Breast epithelium (tissue), 4 donors: ENCODE measurements at regions of chr2 and their contacts with region 1.

Region 1: GRCh38 chr2:115842306-115842705 is 1399.9 kb downstream of the DPP10 start:
- DNase-seq: no peak
- H3K4me3 ChIP-seq: no peak overlapping the region
- H3K27ac ChIP-seq: no peak overlapping the region
- H3K4me1 ChIP-seq: no peaks in the 10 kb centered on the region
- H3K27me3 ChIP-seq: no peaks in the 10 kb centered on the region
- CTCF ChIP-seq: no peak
- POLR2A ChIP-seq: no peak

Region 2: GRCh38 chr2:115327061-115327460 is 515.2 kb before region 1 on chr2:
- intact Hi-C with region 1: loop called (anchors 5 kb)
- DNase-seq: no peak
- H3K4me3 ChIP-seq: no peak overlapping the region
- H3K27ac ChIP-seq: no peak overlapping the region
- H3K4me1 ChIP-seq: no peaks in the 10 kb centered on the region
- H3K27me3 ChIP-seq: no peaks in the 10 kb centered on the region
- CTCF ChIP-seq: no peak
- POLR2A ChIP-seq: no peak

Region 3: DNA sequence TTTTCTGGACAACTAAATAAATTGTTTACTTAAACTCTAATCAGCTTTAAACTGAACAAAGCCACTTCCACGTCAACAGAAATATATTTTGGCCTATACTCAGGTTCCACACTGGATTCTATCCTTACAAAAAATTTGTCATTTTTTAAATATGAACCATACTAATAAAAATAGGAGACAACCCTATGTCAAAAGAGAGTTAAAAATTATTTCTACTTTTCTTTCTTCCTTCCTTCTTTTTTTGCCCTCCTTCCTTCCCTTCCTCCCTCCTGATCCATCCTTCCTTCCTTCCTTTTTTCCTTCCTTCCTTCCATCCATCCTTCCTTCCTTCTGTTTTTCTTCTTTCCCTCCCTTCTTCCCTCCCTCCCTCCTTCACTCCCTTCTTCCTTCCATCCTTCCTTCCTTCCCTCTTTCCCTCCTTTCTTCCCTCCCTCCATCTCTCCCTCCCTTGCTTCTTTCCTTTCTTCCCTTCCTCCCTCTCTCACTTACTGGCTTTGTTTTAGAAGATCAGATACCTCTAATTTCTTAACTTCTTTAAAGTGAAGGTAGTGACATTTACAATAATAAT is 45.0 kb after region 1 on chr2:
- intact Hi-C with region 1: no loop called
- DNase-seq: no peak
- H3K4me3 ChIP-seq: no peak overlapping the region
- H3K27ac ChIP-seq: no peak overlapping the region
- H3K4me1 ChIP-seq: no peaks in the 10 kb centered on the region
- H3K27me3 ChIP-seq: no peaks in the 10 kb centered on the region
- CTCF ChIP-seq: no peak
- POLR2A ChIP-seq: no peak